PC-3 (cell line): ENCODE measurements at regions of chr6 and their contacts with region 1.

Region 1: DNA sequence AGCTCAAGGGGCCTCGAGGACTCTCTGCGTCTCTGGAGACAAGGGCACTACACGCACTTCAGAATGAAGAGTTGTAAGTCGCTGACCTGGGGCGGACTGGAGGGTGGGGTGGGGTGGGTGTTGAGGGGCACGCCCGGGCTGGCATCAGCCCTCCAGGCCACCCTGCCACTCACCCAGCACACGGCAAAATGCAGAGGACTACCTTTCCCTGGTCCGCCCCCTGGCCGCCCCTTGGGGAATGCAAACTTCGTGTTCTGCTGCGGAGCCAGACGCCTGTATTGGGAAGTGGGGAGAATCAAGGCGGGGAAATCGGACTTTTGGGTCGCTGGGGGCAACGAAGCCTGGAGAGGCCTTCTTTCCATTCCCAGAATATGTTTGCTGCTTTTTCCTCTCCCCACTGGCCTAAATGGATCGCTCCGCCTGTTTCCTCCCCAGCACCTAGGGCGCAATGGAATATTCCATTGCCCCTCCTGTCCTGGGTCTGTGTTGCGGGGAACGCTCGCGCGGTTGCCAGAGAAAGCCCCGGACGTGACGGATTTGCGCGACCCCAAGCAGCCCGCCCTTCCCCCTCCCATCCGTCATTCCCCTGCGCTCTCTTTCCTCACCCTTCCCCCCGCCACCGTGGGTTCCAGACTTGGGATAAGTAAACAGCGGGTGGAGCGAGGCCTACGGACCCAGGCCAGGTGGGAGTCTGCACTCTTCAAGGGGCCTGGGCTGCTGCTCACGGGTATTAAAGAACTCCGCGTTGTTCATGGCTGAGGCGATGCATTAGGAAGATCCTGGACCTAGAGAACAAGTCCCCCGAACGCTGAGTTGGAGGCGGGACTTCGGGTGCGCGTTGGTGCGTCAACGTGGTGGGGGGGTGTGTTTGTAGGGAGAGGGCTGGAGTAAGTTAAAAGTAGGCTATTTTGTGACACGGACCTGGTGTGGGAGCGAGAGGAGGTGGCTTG is at the start of gene PPT2:
- DNase-seq: peak; percentile 89
- ATAC-seq: peak; percentile 79
- H3K4me3 ChIP-seq: peak within 1 kb of the TSS; percentile 96
- H3K27ac ChIP-seq: peak within 1 kb of the TSS; percentile 85
- H3K4me1 ChIP-seq: peaks cover 12% of the 10 kb centered on the region
- H3K27me3 ChIP-seq: no peaks in the 10 kb centered on the region
- CTCF ChIP-seq: no peak; the same call in 1 of the 2 replicates
- total RNA-seq, gene PPT2: 16.6 and 30.8 TPM in 2 replicates

Region 2: GRCh38 chr6:32087574-32088486 is 66.0 kb before region 1 on chr6:
- CTCF ChIA-PET with region 1: no interaction called
- POLR2A ChIA-PET with region 1: no interaction called
- intact Hi-C with region 1: loop called (anchors 1 kb)
- DNase-seq: peak; percentile 88
- ATAC-seq: peak; percentile 71
- H3K4me3 ChIP-seq: no peak overlapping the region
- H3K27ac ChIP-seq: no peak overlapping the region
- H3K4me1 ChIP-seq: peaks cover 31% of the 10 kb centered on the region
- H3K27me3 ChIP-seq: no peaks in the 10 kb centered on the region
- CTCF ChIP-seq: peak; percentile 54

Region 3: DNA sequence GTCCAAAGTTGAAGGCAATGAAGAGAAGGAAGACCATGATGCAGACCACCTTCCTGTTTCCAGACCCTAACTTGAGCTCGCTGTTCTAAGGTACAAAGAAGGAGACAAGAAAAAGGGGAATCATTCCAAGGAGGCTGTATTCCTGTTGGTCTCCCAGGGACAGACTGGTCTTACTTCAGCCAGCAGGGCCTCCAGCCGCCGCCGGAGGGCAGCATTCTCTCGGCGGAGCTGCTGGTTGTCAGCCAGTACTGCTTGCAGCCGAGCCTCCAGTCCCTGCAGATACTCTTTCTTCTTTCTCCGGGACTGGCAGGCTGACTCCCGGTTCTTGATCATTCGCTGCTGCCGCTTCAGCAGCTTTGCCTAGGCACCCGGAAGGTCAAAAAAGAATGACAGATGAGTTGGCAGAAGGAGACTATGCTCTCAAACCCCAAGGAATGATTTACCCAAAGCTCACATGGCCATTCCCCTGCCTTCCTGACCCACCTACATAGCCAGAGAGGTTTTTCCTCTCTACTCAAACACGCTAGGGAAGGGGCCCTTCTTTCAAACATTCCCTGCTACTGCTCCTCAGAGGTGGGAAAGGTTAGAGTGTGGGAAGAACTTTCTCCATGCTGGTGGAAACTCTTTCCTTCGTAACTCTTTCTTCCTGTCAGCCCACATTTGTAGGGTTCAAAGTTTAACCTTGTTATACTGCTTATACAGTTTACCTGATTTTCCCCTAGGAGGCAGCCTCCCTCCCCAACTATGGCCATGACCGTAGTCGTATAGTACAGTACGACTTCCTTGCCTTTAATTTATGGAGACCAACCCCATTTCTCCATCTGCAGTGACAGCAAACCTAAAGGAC is 34.8 kb before region 1 on chr6:
- CTCF ChIA-PET with region 1: no interaction called
- POLR2A ChIA-PET with region 1: no interaction called
- intact Hi-C with region 1: loop called (anchors 1 kb)
- DNase-seq: peak; percentile 83
- ATAC-seq: peak; percentile 50
- H3K4me3 ChIP-seq: no peak overlapping the region
- H3K27ac ChIP-seq: no peak overlapping the region
- H3K4me1 ChIP-seq: peaks cover 21% of the 10 kb centered on the region
- H3K27me3 ChIP-seq: no peaks in the 10 kb centered on the region
- CTCF ChIP-seq: peak; percentile 92

Region 4: DNA sequence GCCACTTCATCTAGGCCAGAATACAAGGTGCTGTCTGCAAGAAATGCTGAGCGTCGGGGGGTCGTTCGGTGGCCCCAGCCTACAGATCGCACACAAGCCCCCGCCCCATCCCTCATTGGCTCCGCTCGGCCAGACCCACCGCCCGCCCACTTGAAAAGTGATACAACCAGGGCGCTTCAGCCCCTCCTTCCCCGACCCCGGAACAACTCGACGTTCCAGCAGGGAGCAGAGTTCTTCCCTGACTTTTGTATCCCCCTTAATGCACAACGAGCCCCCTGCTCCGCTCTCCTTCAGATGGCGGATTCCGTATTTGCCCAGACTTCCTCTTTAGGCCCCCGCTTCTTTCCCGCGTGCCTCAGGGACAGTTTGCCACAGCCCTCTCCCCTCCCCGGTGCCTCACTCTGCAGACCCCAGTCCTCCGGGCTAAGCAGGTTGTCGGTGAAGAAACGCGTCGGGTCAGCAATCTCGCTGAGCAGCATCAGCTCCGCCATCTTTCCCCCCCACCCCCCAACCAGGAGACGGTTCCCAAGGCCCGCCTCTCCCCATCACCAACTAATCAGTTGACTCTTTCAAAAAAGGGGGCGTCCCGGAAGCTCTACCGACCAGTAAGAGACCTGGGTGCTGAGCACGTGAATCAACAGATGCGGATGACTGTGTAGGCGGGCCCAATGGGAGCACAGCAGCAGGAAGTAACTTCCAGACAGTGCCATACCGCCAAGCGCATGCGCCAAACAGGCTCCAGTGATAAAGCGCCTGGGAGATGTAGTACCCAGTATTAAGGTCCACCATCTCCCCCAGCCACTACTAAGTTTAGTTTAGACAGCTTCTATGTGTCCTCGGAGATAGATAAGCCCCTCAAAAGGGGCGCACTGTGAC is 25.9 kb before region 1 on chr6 and contains the start of gene ATF6B:
- CTCF ChIA-PET with region 1: interaction called, 4 read pairs
- POLR2A ChIA-PET with region 1: interaction called, 3 read pairs
- intact Hi-C with region 1: loop called (anchors 1 kb)
- DNase-seq: peak; percentile 98
- ATAC-seq: peak; percentile 89
- H3K4me3 ChIP-seq: peak within 1 kb of the TSS; percentile 90
- H3K27ac ChIP-seq: peak within 1 kb of the TSS; percentile 47
- H3K4me1 ChIP-seq: peaks cover 25% of the 10 kb centered on the region
- H3K27me3 ChIP-seq: no peaks in the 10 kb centered on the region
- CTCF ChIP-seq: no peak
- total RNA-seq, gene ATF6B: 33.4 and 35.7 TPM in 2 replicates

Region 5: DNA sequence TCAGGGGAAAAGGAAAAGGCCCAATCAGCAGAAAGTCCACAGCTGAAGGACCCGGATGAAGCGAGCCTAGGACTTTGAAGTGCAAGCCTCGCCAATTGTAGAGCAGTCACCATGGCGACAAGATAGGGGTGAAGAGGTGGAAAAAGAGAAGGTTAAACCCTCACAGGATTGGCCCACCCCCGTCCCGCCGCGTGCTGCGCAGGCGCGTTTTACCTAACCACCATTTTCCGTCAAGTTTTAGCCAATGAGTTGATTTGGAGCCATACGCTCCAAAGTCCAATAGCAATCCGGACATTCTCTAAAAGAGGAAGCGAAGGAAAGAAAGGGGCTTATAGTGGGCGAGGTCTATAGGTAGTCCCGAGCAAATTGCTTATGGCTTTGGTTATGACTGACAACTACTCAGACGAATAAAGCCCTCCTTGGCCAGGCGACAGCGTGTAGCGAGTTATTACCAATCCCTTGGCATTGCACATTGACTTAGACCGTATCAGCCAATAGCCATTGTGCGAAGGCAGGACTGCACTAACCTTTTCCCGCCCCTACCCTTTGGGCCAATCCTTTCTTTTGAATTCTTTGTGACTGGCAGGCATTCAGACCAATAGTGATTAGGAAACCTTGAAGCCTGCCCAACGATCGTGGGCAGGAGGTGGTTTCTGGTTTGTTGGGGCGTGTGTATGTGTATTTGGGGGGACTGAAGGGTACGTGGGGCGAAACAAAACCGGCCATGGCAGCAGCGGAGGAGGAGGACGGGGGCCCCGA is 24.1 kb after region 1 on chr6 and contains the start of gene RNF5:
- CTCF ChIA-PET with region 1: no interaction called
- POLR2A ChIA-PET with region 1: no interaction called
- intact Hi-C with region 1: loop called (anchors 1 kb)
- DNase-seq: peak; percentile 100
- ATAC-seq: peak; percentile 86
- H3K4me3 ChIP-seq: peak within 1 kb of the TSS; percentile 94
- H3K27ac ChIP-seq: peak within 1 kb of the TSS; percentile 83
- H3K4me1 ChIP-seq: peaks cover 33% of the 10 kb centered on the region
- H3K27me3 ChIP-seq: no peaks in the 10 kb centered on the region
- CTCF ChIP-seq: no peak
- total RNA-seq, gene RNF5: 69.0 and 80.1 TPM in 2 replicates

Region 6: DNA sequence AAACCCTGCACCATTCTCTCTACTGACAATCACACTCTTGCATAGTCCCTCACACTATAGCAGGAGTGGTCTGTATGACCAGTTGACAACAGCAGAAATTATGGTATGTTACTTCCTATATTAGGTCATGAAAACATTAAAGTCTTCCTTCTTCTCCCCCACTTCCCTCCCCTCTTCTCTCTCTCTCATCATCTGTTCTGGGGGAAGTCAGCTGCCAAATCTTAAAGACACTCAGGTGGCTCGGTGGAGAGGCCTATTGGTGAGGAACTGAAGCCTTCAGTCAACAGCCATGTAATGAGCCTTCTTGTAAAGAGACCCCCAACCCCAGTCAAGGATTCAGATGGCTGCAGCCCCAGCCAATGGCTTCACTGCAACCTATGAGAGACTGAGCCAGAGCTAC is 228.9 kb after region 1 on chr6:
- CTCF ChIA-PET with region 1: no interaction called
- POLR2A ChIA-PET with region 1: no interaction called
- intact Hi-C with region 1: no loop called
- DNase-seq: no peak
- ATAC-seq: no peak
- H3K4me3 ChIP-seq: no peak overlapping the region
- H3K27ac ChIP-seq: no peak overlapping the region
- H3K4me1 ChIP-seq: no peaks in the 10 kb centered on the region
- H3K27me3 ChIP-seq: no peaks in the 10 kb centered on the region
- CTCF ChIP-seq: no peak